ENCODE measurements at regions of chr11 and their contacts with region 1.

Region 1: GRCh38 chr11:125174686-125175085 is 10.1 kb downstream of the PKNOX2 start:
- DNase-seq: no peak
- CTCF ChIP-seq: no peak

Region 2: DNA sequence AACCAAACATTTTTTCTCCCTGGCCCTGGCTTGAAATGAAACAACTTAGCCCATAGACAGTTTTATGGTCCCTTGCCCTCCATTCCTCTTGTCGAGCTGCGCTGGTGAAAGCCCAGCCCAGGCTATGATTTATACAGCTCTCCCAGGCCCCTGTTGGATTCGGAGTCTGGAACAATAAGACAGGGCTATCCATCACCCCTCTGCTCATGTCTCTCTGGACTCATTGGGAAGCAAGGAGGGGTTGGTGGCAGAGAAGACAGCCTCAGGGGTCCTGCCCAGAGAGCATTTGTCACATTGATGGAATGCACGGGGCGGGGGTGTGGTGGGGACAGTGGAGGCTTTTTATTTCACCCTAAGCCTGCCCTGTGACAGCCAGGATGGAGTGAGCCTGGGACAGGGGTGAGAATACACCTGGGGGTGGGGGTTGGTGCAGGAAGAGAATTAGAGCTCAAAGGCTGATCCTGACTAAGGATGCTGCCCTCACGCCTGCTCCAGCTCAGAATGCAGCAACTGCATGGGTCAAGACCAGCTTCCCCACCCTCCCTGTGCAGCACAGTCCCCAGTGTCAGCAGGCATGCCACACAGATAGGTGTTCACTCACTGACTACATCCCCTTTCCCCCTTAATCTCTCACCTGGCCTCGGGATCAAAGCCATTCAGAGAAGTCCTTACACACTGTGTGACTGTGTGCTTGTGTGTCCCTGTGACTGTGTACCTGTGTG is 20.1 kb before region 1 on chr11:
- CTCF ChIA-PET with region 1: no interaction called
- POLR2A ChIA-PET with region 1: no interaction called
- DNase-seq: no peak
- CTCF ChIP-seq: no peak

Region 3: DNA sequence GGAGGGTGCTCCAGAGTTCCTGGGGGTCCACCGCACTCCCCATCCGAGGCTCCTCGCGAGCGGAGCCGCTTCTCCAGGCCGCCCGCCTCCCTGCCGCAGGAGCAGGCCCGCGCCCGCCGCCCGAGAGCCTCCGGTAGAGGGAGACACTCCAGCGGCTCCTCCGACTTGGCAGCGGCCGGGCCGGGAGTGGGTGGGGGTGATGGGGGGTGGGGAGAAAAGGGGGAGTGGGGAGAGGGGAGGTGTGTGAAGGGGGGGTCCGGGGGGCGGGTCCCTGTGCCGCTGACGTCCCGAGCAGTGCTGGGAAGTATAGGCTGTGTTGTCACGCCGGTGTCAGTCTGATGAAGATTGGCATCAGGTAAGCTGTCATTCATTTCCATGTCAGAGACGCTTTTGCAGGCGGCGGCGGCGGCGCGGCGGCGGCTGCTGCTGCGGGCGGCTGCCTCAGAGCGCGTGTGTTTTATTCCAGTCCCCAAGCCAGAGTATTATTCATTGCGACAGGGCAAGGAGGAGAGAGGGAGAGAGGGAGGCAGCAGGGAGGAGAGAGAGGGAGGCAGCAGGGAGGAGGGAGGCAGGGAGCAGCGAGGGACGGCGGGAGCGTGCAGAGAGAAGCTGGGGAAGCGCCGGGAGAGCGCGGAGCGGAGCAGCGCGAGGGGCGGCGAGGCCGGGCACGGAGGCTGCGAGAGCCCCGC is 10.1 kb before region 1 on chr11 and contains the start of gene PKNOX2:
- CTCF ChIA-PET with region 1: interaction called, 15 read pairs
- POLR2A ChIA-PET with region 1: no interaction called
- DNase-seq: peak; percentile 69
- CTCF ChIP-seq: peak; percentile 73

Region 4: GRCh38 chr11:125401746-125402145 is 227.1 kb after region 1 on chr11:
- CTCF ChIA-PET with region 1: no interaction called
- POLR2A ChIA-PET with region 1: no interaction called
- DNase-seq: no peak
- CTCF ChIP-seq: no peak

Measured in GM10248 (cell line).